Activated B cell treated with CpG ODN at 0.5 μM for 24 hours (primary cell): ENCODE measurements at regions of chr6 and their contacts with region 1.

Region 1: GRCh38 chr6:14819840-14820420 is 425.9 kb upstream of the JARID2 start:
- DNase-seq: no peak
- ATAC-seq: no peak
- H3K4me3 Mint-ChIP-seq: no peak overlapping the region
- H3K27ac Mint-ChIP-seq: no peak overlapping the region
- H3K4me1 Mint-ChIP-seq: peaks cover 9% of the 10 kb centered on the region
- H3K27me3 Mint-ChIP-seq: no peaks in the 10 kb centered on the region
- CTCF ChIP-seq: no peak

Region 2: GRCh38 chr6:14799928-14800327 is 20.0 kb before region 1 on chr6:
- CTCF ChIA-PET with region 1: no interaction called
- POLR2A ChIA-PET with region 1: no interaction called
- intact Hi-C with region 1: loop called (anchors 2 kb)
- DNase-seq: no peak
- ATAC-seq: peak; percentile 77
- H3K4me3 Mint-ChIP-seq: no peak overlapping the region
- H3K27ac Mint-ChIP-seq: no peak overlapping the region
- H3K4me1 Mint-ChIP-seq: peaks cover 9% of the 10 kb centered on the region
- H3K27me3 Mint-ChIP-seq: no peaks in the 10 kb centered on the region
- CTCF ChIP-seq: no peak